Activated B cell treated with CpG ODN at 0.5 μM for 24 hours (primary cell): ENCODE measurements at regions of chr2 and their contacts with region 1.

Region 1: GRCh38 chr2:144493027-144493809 is 26.7 kb downstream of the ZEB2 start:
- DNase-seq: no peak
- ATAC-seq: peak; percentile 63
- H3K4me3 Mint-ChIP-seq: no peak overlapping the region
- H3K27ac Mint-ChIP-seq: peak overlapping the region; percentile 64
- H3K4me1 Mint-ChIP-seq: peaks cover 87% of the 10 kb centered on the region
- H3K27me3 Mint-ChIP-seq: no peaks in the 10 kb centered on the region
- CTCF ChIP-seq: no peak

Region 2: DNA sequence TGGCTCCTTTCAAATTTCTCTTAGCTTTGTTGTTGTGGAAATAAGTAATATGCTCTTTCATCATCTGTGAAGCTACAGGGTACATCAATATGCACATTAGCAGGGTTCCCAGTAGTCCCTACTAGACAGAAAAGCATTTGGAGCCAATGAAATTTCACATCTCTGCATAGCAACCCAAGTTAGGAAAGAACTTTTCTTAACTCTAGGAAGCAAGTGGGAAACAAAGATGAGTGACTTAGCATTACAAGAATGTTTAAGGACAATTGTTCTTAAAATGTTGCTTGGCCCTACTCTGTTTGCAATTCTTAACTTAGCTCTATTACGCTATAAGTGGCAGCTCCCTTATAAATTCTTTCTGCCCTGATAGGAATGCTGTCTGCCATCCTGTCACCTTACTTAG is 12.9 kb before region 1 on chr2:
- CTCF ChIA-PET with region 1: no interaction called
- POLR2A ChIA-PET with region 1: interaction called, 3 read pairs
- intact Hi-C with region 1: loop called (anchors 2 kb)
- DNase-seq: no peak
- ATAC-seq: no peak
- H3K4me3 Mint-ChIP-seq: no peak overlapping the region
- H3K27ac Mint-ChIP-seq: no peak overlapping the region
- H3K4me1 Mint-ChIP-seq: peaks cover 81% of the 10 kb centered on the region
- H3K27me3 Mint-ChIP-seq: no peaks in the 10 kb centered on the region
- CTCF ChIP-seq: no peak

Region 3: DNA sequence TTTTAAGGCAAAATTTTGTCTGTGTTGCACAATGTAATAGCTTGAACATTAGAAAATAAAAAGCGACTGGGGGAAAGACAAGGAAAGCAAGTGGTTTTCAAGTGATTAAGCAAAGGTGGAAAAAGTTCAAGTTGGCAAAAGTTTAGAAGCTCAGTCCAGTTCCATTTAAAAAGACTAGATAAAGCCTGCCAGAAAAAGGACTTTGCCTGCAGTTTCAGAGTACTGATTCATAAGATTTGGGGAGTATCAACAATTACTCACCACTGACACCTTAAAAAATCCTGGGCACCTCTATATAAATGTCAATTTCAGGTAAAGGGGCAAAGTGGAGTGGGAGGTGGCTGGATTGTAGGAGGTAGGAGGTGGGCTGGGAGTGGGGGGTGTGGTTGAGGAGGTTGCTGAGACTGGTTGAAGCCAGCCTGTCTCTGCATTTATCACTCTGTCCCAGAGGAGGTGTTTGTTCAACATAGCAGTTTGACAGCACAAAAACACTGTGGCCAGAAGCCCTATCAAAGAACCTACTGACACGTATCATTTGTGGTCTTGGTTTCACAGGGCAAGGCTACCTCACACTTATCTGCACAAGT is 12.1 kb after region 1 on chr2:
- CTCF ChIA-PET with region 1: no interaction called
- POLR2A ChIA-PET with region 1: interaction called, 4 read pairs
- intact Hi-C with region 1: loop called (anchors 1 kb)
- DNase-seq: no peak
- ATAC-seq: peak; percentile 49
- H3K4me3 Mint-ChIP-seq: peak overlapping the region; percentile 32
- H3K27ac Mint-ChIP-seq: peak overlapping the region; percentile 57
- H3K4me1 Mint-ChIP-seq: peaks cover 81% of the 10 kb centered on the region
- H3K27me3 Mint-ChIP-seq: no peaks in the 10 kb centered on the region
- CTCF ChIP-seq: no peak

Region 4: GRCh38 chr2:144510294-144510991 is 17.2 kb after region 1 on chr2:
- CTCF ChIA-PET with region 1: no interaction called
- POLR2A ChIA-PET with region 1: interaction called, 4 read pairs
- intact Hi-C with region 1: loop called (anchors 1 kb)
- DNase-seq: no peak
- ATAC-seq: peak; percentile 67
- H3K4me3 Mint-ChIP-seq: peak overlapping the region; percentile 77
- H3K27ac Mint-ChIP-seq: peak overlapping the region; percentile 88
- H3K4me1 Mint-ChIP-seq: peaks cover 100% of the 10 kb centered on the region
- H3K27me3 Mint-ChIP-seq: no peaks in the 10 kb centered on the region
- CTCF ChIP-seq: no peak